Adrenal gland (tissue), 19 donors: ENCODE measurements at regions of chr22 and their contacts with region 1.

Region 1: DNA sequence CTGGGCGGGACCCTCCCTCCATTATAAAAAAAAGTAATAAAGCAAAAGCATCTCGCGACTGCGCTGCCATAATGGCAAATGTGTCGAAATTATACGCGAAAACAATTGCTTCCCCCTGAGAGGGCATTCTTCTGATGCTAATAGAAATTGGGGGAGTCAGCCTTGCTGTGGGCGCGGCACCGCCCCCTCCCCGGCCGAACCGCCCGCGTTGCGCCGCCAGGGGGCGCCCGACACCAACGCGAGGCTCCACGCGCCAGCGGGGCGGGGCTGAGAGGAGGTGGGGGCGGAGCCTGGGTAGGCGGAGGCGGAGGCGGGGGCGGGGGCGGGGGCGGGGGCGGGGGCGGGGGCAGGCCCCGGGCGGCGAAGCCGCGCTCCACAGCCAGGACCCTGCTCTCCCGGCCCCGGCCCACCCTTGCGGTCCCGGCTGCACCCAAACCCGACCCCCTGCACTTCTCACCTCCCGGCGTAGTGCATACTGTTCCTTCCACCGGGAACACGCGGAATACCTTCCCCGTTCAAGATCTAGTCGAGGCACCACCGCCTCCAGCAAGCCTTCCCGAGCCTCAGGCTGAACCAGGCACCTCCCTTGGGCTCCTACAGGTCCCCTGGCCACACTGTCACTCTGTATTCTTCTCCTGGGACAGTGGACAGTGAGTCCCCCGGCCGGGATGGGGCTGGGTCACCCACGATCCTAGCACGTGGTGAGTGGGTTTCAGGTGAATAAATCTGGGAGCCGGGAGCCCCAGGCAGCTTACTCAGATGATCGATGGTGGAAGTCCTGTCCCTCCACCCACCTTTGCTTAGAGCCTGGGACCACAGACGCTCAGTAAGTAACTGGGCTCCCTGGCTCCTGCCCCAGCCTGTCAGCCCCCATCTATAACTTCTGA is 15.5 kb upstream of the UPK3A start:
- DNase-seq: peak; percentile 67 to 89 (median 84)
- H3K4me3 ChIP-seq: peak overlapping the region in 3 of 4 donors; percentile 51 to 56 (median 53)
- H3K27ac ChIP-seq: peak overlapping the region in 1 of 5 donors; percentile 72
- H3K4me1 ChIP-seq: peaks cover 7 to 19% of the 10 kb centered on the region in 2 donors
- H3K27me3 ChIP-seq: no peaks in the 10 kb centered on the region
- CTCF ChIP-seq: peak; percentile 61 to 98 (median 84)
- POLR2A ChIP-seq: no peak

Region 2: GRCh38 chr22:44828193-44828592 is 441.0 kb before region 1 on chr22:
- intact Hi-C with region 1: loop called in 1 of 2 experiments (anchors 10 kb)
- DNase-seq: peak in 1 of 7 donors; percentile 9
- H3K4me3 ChIP-seq: no peak overlapping the region
- H3K27ac ChIP-seq: no peak overlapping the region
- H3K4me1 ChIP-seq: no peaks in the 10 kb centered on the region
- H3K27me3 ChIP-seq: no peaks in the 10 kb centered on the region
- CTCF ChIP-seq: peak in 2 of 6 experiments; percentile 23 to 29
- POLR2A ChIP-seq: no peak

Region 3: GRCh38 chr22:44975427-44976262 is 293.6 kb before region 1 on chr22:
- intact Hi-C with region 1: loop called in 1 of 2 experiments (anchors 10 kb)
- DNase-seq: peak; percentile 89 to 93 (median 91)
- H3K4me3 ChIP-seq: no peak overlapping the region
- H3K27ac ChIP-seq: no peak overlapping the region
- H3K4me1 ChIP-seq: no peaks in the 10 kb centered on the region
- H3K27me3 ChIP-seq: no peaks in the 10 kb centered on the region
- CTCF ChIP-seq: peak; percentile 71 to 78 (median 76)
- POLR2A ChIP-seq: no peak

Region 4: DNA sequence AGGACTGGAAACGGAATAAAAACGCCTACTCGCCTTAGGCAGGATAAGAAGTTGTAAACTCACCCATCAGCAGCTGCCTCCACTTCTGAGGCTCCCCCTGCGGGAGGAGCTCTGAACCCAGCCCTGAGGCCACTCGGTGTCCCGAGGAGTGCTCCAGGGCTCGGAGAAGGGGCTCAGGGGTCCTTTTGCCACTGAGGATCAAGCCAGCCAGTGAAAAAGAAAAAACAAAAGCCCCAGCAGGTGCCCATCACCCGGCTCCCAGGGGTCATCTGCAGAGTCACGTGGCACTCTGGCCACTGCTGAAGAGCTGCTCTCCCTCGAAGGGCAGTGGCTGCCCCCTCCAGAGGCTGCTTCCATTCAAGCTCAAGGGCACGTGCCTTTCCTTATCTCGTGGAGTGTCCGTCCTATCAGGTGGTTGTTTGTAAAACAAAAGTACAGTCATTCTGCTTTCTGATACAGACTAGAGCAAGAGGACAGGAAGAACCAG is 76.5 kb before region 1 on chr22:
- intact Hi-C with region 1: no loop called
- DNase-seq: peak in 6 of 7 donors; percentile 72 to 87 (median 80)
- H3K4me3 ChIP-seq: peak overlapping the region in 1 of 4 donors; percentile 23
- H3K27ac ChIP-seq: peak overlapping the region; percentile 62 to 84 (median 78)
- H3K4me1 ChIP-seq: peaks cover 0 to 8% of the 10 kb centered on the region in 2 donors
- H3K27me3 ChIP-seq: no peaks in the 10 kb centered on the region
- CTCF ChIP-seq: peak in 2 of 6 experiments; percentile 19 to 24
- POLR2A ChIP-seq: peak in 1 of 2 donors; percentile 75

Region 5: GRCh38 chr22:45429981-45430775 is 161.0 kb after region 1 on chr22:
- intact Hi-C with region 1: loop called (anchors 2 to 5 kb)
- DNase-seq: no peak
- H3K4me3 ChIP-seq: no peak overlapping the region
- H3K27ac ChIP-seq: no peak overlapping the region
- H3K4me1 ChIP-seq: peaks cover 0 to 2% of the 10 kb centered on the region in 2 donors
- H3K27me3 ChIP-seq: no peaks in the 10 kb centered on the region
- CTCF ChIP-seq: no peak
- POLR2A ChIP-seq: no peak

Region 6: GRCh38 chr22:45435544-45436139 is 166.4 kb after region 1 on chr22:
- intact Hi-C with region 1: loop called (anchors 2 to 5 kb)
- DNase-seq: peak; percentile 84 to 96 (median 91)
- H3K4me3 ChIP-seq: no peak overlapping the region
- H3K27ac ChIP-seq: peak overlapping the region in 2 of 5 donors; percentile 51 to 69
- H3K4me1 ChIP-seq: peaks cover 0 to 5% of the 10 kb centered on the region in 2 donors
- H3K27me3 ChIP-seq: peaks cover 4% of the 10 kb centered on the region
- CTCF ChIP-seq: peak; percentile 95 to 98 (median 98)
- POLR2A ChIP-seq: no peak

Region 7: GRCh38 chr22:45553351-45554039 is 284.3 kb after region 1 on chr22:
- intact Hi-C with region 1: loop called (anchors 5 kb)
- DNase-seq: peak; percentile 78 to 89 (median 82)
- H3K4me3 ChIP-seq: no peak overlapping the region
- H3K27ac ChIP-seq: peak overlapping the region in 4 of 5 donors; percentile 41 to 87 (median 70)
- H3K4me1 ChIP-seq: peaks cover 6 to 35% of the 10 kb centered on the region in 2 donors
- H3K27me3 ChIP-seq: no peaks in the 10 kb centered on the region
- CTCF ChIP-seq: peak; percentile 85 to 91 (median 87)
- POLR2A ChIP-seq: no peak